ENCODE measurements at regions of chr3 and their contacts with region 1.

Region 1: GRCh38 chr3:40580494-40581091 is 55.8 kb downstream of the ZNF621 start:
- DNase-seq: peak; percentile 64
- H3K4me3 ChIP-seq: no peak overlapping the region
- H3K27ac ChIP-seq: no peak overlapping the region
- H3K4me1 ChIP-seq: no peaks in the 10 kb centered on the region
- H3K27me3 ChIP-seq: no peaks in the 10 kb centered on the region
- CTCF ChIP-seq: peak; percentile 95

Region 2: DNA sequence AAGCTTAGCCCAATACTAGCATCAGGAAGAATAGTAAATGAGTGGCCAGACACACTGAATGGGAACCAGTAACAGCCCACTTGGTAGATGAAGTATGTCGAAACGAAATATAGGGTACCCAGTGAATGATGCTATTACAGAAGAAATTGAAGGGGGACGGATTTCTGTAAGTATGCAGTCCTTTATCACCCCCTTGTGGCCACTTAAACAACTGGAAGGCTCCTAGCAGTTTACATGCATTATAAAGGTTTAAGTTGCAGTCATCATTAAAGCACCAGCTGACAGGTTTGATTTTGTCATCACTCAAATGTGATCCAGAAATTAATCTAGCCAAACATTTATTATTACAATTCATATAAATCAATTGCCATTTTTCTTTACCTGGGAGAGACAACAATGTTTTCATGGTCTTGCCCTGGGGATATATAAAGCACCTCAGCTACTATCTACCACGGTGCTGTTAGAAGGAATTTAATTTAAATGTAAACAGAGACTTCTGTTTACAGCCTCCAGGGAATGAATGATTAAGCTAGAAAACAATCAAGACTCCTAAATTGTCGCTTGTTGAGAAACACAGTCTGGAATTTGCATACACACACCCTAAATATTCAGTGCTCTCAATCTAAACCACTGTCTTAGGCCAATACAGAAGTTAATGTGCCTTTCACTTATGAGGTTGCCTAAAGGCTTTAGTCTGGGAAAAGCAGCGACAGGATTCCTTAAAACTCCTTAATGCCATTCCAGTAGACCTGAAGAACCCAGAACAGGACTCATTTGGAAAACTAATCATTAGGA is 263.3 kb before region 1 on chr3:
- intact Hi-C with region 1: loop called (anchors 10 kb)
- DNase-seq: peak; percentile 53
- H3K4me3 ChIP-seq: no peak overlapping the region
- H3K27ac ChIP-seq: no peak overlapping the region
- H3K4me1 ChIP-seq: peaks cover 4% of the 10 kb centered on the region
- H3K27me3 ChIP-seq: no peaks in the 10 kb centered on the region
- CTCF ChIP-seq: peak; percentile 76

Region 3: GRCh38 chr3:40719660-40720287 is 139.2 kb after region 1 on chr3:
- intact Hi-C with region 1: loop called (anchors 10 kb)
- DNase-seq: no peak
- H3K4me3 ChIP-seq: no peak overlapping the region
- H3K27ac ChIP-seq: no peak overlapping the region
- H3K4me1 ChIP-seq: no peaks in the 10 kb centered on the region
- H3K27me3 ChIP-seq: no peaks in the 10 kb centered on the region
- CTCF ChIP-seq: peak; percentile 27

Region 4: DNA sequence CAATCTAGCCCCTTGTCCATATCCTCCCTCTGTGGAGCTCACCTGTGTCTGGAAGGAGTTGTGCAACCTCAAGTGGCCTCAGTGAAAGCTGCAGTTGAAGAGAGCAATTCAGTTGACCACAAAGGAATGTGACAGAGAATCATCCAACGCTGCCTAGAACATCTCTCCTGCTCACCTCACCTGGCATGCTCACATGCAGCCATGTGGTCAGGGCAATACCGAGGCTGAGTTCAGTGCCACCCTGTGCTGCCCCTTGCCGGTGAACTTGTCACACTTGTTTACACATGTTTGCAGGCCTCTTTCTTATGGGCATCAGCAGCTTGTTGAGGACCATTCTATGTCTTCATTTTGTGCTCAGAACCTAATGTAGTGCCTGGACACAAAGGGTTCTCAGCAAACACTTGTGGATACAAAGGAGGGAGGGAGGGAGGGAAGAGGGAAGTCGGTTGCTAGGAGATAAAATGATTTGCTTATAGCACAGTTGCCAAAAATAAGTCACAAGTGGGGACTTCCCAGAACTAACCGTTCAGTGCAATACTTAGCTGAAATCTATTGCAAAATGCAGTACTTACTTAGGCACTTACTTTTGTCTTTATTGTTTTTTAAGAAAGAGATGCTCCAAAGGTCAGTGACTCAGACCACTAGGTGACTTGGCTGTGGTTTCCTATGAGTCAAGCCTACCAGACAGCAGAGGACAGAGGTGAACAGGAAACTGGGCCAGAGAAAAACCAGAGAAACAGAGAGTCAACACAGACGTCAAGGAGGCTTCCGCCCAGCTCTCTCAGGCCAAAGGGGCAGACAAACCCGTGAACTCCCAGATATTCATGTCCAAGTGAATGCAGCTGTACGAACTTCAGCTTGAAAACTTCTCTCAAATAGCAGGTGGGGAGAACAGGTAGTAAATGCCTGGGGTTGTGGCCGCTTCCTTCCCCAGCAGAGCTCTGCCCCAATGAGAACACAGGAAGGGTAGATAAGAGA is 390.9 kb after region 1 on chr3:
- intact Hi-C with region 1: loop called (anchors 5 kb)
- DNase-seq: peak; percentile 76
- H3K4me3 ChIP-seq: no peak overlapping the region
- H3K27ac ChIP-seq: peak overlapping the region; percentile 60
- H3K4me1 ChIP-seq: peaks cover 15% of the 10 kb centered on the region
- H3K27me3 ChIP-seq: no peaks in the 10 kb centered on the region
- CTCF ChIP-seq: no peak

Region 5: GRCh38 chr3:41216993-41217392 is 636.4 kb after region 1 on chr3:
- intact Hi-C with region 1: loop called (anchors 10 kb)
- DNase-seq: no peak
- H3K4me3 ChIP-seq: no peak overlapping the region
- H3K27ac ChIP-seq: no peak overlapping the region
- H3K4me1 ChIP-seq: peaks cover 3% of the 10 kb centered on the region
- H3K27me3 ChIP-seq: no peaks in the 10 kb centered on the region
- CTCF ChIP-seq: no peak

Region 6: GRCh38 chr3:41716471-41716870 is 1135.9 kb after region 1 on chr3:
- intact Hi-C with region 1: loop called (anchors 5 kb)
- DNase-seq: no peak
- H3K4me3 ChIP-seq: no peak overlapping the region
- H3K27ac ChIP-seq: no peak overlapping the region
- H3K4me1 ChIP-seq: no peaks in the 10 kb centered on the region
- H3K27me3 ChIP-seq: no peaks in the 10 kb centered on the region
- CTCF ChIP-seq: peak; percentile 31

Region 7: DNA sequence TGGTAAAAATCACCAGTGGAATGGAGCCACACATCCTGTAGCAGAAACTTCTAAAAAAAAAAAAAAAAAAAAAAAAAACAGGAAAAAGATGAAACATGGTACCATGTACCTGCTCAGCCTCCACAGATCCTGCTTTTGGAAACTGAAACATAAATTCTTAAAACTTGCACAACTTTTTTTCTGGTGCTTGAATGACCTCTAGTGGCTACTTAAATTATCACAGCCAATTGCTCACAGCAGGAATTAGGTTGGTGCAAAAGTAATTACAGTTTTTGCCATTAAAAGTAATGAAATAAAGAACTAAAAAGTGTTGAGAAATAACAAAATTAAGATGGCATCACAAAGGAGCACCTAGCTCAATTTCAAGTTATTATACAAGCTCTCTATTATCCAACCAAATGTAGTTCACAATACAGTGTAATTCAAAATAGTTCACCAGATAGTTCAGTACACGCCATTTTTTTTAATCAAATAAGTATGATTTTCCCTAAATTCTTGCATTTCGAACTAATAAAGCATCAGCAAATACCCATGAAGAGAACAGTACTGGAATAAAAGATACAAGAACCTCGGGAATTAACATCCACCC is 1300.7 kb after region 1 on chr3:
- intact Hi-C with region 1: loop called (anchors 2 kb)
- DNase-seq: no peak
- H3K4me3 ChIP-seq: no peak overlapping the region
- H3K27ac ChIP-seq: no peak overlapping the region
- H3K4me1 ChIP-seq: no peaks in the 10 kb centered on the region
- H3K27me3 ChIP-seq: no peaks in the 10 kb centered on the region
- CTCF ChIP-seq: peak; percentile 71